Caco-2 (cell line): ENCODE measurements at regions of chr20 and their contacts with region 1.

Region 1: DNA sequence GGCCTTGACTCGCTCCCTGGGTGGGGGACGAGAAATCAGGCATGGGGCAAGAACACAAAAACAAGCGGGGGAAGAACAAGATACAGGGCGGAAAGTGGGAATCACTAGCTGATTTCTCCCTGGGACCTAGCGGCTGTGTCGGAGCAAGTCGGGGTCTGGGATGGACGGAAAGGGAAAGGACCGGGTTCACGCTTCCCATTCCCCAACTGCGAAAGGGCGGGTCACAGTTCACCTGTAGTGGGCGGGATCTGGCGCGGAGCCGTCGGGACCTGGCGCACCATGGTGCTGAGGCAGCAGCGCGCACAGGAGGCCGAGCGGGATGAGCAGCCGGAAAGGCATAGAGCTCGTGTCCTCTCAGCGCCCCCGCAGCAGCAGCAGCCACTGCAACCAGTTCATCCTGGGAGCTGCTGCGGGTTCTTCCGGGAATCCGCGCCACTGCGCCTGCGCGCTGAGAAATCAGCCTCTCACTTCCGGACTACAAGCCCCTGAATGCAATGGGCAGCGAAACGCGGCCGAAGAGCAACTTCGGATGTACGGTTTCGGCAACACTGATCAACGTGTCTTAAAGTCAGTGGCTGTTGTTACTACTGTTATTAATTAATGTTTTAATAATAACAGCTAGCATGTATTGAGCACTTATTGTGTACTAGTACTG is at the start of gene EDEM2:
- DNase-seq: peak; percentile 100
- H3K4me3 ChIP-seq: peak within 1 kb of the TSS; percentile 53
- H3K4me3 Mint-ChIP-seq: peak within 1 kb of the TSS; percentile 88
- H3K27ac Mint-ChIP-seq: peak within 1 kb of the TSS; percentile 96
- H3K4me1 ChIP-seq: peaks cover 20% of the 10 kb centered on the region
- H3K4me1 Mint-ChIP-seq: peaks cover 39% of the 10 kb centered on the region
- H3K27me3 ChIP-seq: no peaks in the 10 kb centered on the region
- H3K27me3 Mint-ChIP-seq: no peaks in the 10 kb centered on the region
- CTCF ChIP-seq: peak in 1 of 2 experiments; percentile 18
- total RNA-seq, gene EDEM2: 41.2 and 42.4 TPM in 2 replicates

Region 2: DNA sequence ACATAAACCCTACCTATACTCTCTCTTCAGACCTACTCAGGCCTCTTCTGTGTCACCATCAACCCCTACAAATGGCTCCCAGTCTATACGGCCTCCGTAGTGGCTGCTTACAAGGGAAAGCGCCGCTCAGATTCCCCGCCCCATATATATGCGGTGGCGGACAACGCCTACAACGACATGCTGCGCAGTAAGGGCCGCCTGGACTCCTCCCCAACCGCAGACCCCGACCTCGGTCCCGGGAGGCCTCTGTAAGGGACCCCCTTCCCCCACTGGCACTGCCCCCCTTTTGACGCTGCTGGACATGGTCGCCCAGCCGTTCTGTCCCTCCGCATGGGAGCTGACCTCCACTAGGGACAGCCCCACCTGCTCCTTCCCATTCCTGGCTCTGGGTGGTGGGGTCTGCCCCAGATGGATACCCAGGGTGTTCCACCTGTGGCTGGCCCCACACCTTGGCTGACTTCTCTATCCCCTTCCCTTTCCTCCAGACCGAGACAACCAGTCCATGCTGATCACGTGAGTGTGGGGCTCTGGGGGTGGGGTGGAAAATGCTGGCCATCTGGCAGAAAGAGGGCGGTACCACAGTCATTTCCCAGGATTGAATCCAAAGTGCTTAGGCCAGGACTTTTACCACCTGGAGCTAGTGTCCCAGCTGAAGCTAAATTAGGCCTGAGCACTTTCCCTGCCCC is 166.4 kb before region 1 on chr20:
- CTCF ChIA-PET with region 1: no interaction called
- POLR2A ChIA-PET with region 1: no interaction called
- intact Hi-C with region 1: no loop called
- DNase-seq: peak in 1 of 2 experiments; percentile 59
- H3K4me3 ChIP-seq: no peak overlapping the region
- H3K4me3 Mint-ChIP-seq: no peak overlapping the region
- H3K27ac Mint-ChIP-seq: no peak overlapping the region
- H3K4me1 ChIP-seq: peaks cover 5% of the 10 kb centered on the region
- H3K4me1 Mint-ChIP-seq: peaks cover 7% of the 10 kb centered on the region
- H3K27me3 ChIP-seq: no peaks in the 10 kb centered on the region
- H3K27me3 Mint-ChIP-seq: no peaks in the 10 kb centered on the region
- CTCF ChIP-seq: no peak

Region 3: DNA sequence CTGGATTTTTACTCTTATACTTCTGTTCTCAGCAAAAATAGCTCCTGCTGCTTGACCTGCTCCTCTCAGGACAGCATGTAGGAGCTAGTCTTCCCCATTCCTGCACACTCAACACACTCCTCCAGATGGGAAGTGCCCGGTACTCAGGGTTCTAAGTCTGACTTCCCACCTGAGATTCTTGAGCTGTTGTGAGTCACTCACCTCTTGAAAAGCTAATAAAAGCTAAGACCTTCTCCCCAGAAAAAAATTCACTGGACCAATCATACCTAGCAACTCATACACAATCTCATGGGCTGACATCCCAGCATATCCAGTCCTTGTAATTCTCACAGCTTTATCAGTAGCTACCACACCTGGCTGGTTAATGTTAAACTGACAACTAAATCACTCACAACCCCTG is 107.9 kb before region 1 on chr20:
- CTCF ChIA-PET with region 1: interaction called, 15 read pairs
- POLR2A ChIA-PET with region 1: interaction called, 7 read pairs
- intact Hi-C with region 1: no loop called
- DNase-seq: peak; percentile 89 to 95
- H3K4me3 ChIP-seq: no peak overlapping the region
- H3K4me3 Mint-ChIP-seq: peak overlapping the region; percentile 33
- H3K27ac Mint-ChIP-seq: peak overlapping the region; percentile 38
- H3K4me1 ChIP-seq: peaks cover 43% of the 10 kb centered on the region
- H3K4me1 Mint-ChIP-seq: peaks cover 46% of the 10 kb centered on the region
- H3K27me3 ChIP-seq: no peaks in the 10 kb centered on the region
- H3K27me3 Mint-ChIP-seq: no peaks in the 10 kb centered on the region
- CTCF ChIP-seq: no peak

Region 4: DNA sequence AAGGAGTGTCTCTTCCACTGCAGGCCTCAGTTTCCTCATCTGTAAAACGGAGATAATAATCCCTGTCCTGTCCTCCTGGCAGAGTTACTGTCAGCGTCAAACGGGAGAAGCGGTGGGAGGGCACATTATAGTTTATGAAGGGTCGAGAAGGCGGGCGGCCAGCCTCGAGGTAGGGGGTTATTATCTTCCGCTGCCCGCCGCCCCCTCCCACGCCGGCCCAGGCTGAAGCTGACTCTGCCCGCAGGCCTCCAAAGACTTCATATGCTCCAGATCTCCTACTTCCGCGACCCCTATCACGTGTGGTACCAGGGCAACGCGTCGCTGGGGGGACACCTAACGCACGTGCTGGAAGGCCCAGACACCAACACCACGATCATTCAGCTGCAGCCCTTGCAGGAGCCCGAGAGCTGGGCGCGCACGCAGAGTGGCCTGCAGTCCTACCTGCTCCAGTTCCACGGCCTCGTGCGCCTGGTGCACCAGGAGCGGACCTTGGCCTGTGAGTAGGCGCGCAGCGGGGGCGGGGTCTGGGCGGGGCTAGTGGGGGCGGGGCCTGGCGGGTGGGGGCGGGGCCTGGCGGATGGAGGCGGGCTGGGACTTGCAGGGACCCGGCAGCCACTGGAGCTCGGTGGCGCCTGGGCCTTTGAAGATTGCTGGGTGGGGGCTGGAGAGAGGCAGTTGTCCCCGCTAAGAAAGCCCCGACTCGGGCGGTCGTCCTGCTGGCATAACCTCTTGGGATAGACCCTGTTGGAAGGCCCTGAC is 27.6 kb after region 1 on chr20:
- CTCF ChIA-PET with region 1: interaction called, 12 read pairs
- POLR2A ChIA-PET with region 1: interaction called, 11 read pairs
- intact Hi-C with region 1: loop called (anchors 2 kb)
- DNase-seq: peak; percentile 93 to 97
- H3K4me3 ChIP-seq: peak overlapping the region; percentile 60
- H3K4me3 Mint-ChIP-seq: peak overlapping the region; percentile 91
- H3K27ac Mint-ChIP-seq: peak overlapping the region; percentile 81
- H3K4me1 ChIP-seq: peaks cover 48% of the 10 kb centered on the region
- H3K4me1 Mint-ChIP-seq: peaks cover 53% of the 10 kb centered on the region
- H3K27me3 ChIP-seq: no peaks in the 10 kb centered on the region
- H3K27me3 Mint-ChIP-seq: no peaks in the 10 kb centered on the region
- CTCF ChIP-seq: no peak

Region 5: GRCh38 chr20:35215066-35215956 is 68.3 kb after region 1 on chr20:
- CTCF ChIA-PET with region 1: interaction called, 189 read pairs
- POLR2A ChIA-PET with region 1: no interaction called
- intact Hi-C with region 1: no loop called
- DNase-seq: peak; percentile 71 to 73
- H3K4me3 ChIP-seq: no peak overlapping the region
- H3K4me3 Mint-ChIP-seq: no peak overlapping the region
- H3K27ac Mint-ChIP-seq: peak overlapping the region; percentile 83
- H3K4me1 ChIP-seq: peaks cover 33% of the 10 kb centered on the region
- H3K4me1 Mint-ChIP-seq: peaks cover 27% of the 10 kb centered on the region
- H3K27me3 ChIP-seq: no peaks in the 10 kb centered on the region
- H3K27me3 Mint-ChIP-seq: no peaks in the 10 kb centered on the region
- CTCF ChIP-seq: no peak

Region 6: DNA sequence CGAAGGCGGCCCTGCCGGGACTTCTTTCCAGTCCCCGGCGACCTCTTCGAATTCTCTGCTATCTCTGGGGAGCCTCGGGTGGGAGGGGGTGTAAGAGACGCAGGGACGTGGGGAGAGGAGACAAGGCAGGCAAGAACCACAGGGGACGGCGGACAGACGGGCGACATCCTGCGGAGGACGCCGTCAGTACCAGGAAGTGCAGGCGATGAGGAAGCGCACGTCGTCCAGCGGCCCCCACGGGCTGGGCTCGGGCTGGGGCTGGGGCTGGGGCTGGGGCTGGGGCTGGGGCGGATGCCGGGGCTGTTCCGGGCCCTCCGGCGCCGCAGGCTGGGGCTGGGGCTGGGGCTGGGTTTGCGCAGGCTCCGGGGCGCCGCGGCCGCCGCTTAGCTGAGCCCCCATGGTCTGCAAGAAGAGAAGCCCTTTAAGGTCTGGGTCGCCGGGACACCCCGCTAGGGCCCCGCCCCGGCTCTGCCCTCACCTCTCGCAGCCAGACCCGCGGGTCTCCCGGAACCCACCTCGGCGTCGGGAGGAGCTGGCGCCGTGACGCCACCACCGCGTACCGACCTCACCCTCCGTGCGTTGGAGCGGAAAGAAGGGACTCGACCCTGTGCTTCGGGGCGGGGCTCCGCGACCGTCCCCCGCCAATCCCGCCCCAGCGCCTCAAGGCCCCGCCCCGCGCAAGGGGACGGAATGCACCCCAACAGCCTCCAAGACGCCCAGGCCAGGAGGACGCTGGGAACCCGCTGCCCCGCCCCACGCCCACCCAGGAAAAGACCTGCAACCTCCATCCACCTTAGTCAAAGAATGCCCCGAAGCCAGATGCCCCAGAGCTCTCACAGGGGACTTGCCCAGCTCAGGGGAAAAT is 130.7 kb after region 1 on chr20 and contains the start of gene MMP24OS:
- CTCF ChIA-PET with region 1: interaction called, 21 read pairs
- POLR2A ChIA-PET with region 1: interaction called, 9 read pairs
- intact Hi-C with region 1: no loop called
- DNase-seq: peak; percentile 91
- H3K4me3 ChIP-seq: peak within 1 kb of the TSS; percentile 58
- H3K4me3 Mint-ChIP-seq: peak within 1 kb of the TSS; percentile 72
- H3K27ac Mint-ChIP-seq: peak within 1 kb of the TSS; percentile 74
- H3K4me1 ChIP-seq: peaks cover 4% of the 10 kb centered on the region; the same call in 1 of the 2 replicates
- H3K4me1 Mint-ChIP-seq: no peaks in the 10 kb centered on the region
- H3K27me3 ChIP-seq: no peaks in the 10 kb centered on the region
- H3K27me3 Mint-ChIP-seq: no peaks in the 10 kb centered on the region
- CTCF ChIP-seq: peak; percentile 11 to 48
- total RNA-seq, gene MMP24OS: 38.8 and 42.3 TPM in 2 replicates

Region 7: GRCh38 chr20:35329435-35330139 is 182.5 kb after region 1 on chr20:
- CTCF ChIA-PET with region 1: interaction called, 10 read pairs
- POLR2A ChIA-PET with region 1: no interaction called
- intact Hi-C with region 1: no loop called
- DNase-seq: peak; percentile 91 to 93
- H3K4me3 ChIP-seq: no peak overlapping the region
- H3K4me3 Mint-ChIP-seq: no peak overlapping the region
- H3K27ac Mint-ChIP-seq: peak overlapping the region; percentile 69
- H3K4me1 ChIP-seq: peaks cover 55% of the 10 kb centered on the region
- H3K4me1 Mint-ChIP-seq: peaks cover 32% of the 10 kb centered on the region
- H3K27me3 ChIP-seq: no peaks in the 10 kb centered on the region
- H3K27me3 Mint-ChIP-seq: no peaks in the 10 kb centered on the region
- CTCF ChIP-seq: peak; percentile 92 to 99

Region 8: GRCh38 chr20:35385733-35386132 is 238.7 kb after region 1 on chr20:
- CTCF ChIA-PET with region 1: no interaction called
- POLR2A ChIA-PET with region 1: no interaction called
- intact Hi-C with region 1: no loop called
- DNase-seq: no peak
- H3K4me3 ChIP-seq: no peak overlapping the region
- H3K4me3 Mint-ChIP-seq: no peak overlapping the region
- H3K27ac Mint-ChIP-seq: no peak overlapping the region
- H3K4me1 ChIP-seq: no peaks in the 10 kb centered on the region
- H3K4me1 Mint-ChIP-seq: no peaks in the 10 kb centered on the region
- H3K27me3 ChIP-seq: no peaks in the 10 kb centered on the region
- H3K27me3 Mint-ChIP-seq: no peaks in the 10 kb centered on the region
- CTCF ChIP-seq: no peak